Ascending aorta (tissue), 2 donors: ENCODE measurements at regions of chr2 and their contacts with region 1.

Region 1: DNA sequence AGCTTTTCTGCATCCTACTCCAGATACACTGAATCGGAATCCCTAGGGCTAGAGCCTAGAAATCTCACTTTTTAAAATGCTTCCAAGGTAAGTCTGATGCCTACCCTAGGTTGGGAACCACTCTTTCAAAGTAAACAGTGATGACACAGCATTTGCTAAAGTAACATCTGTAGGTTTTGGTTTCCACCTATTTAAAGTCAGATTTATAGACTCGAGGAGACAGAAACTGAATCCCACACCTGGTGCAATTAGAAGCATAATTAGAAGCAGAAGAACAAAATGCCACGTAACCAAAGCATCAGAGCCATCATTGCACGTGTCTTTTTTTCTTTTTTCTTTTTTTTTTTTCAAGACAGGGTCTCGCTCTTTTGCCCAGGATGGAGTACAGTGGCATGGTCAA is 40.9 kb downstream of the PDK1 start:
- DNase-seq: no peak
- H3K4me3 ChIP-seq: no peak overlapping the region
- H3K27ac ChIP-seq: no peak overlapping the region
- H3K4me1 ChIP-seq: peaks cover 2 to 4% of the 10 kb centered on the region in 2 donors
- H3K27me3 ChIP-seq: no peaks in the 10 kb centered on the region
- CTCF ChIP-seq: no peak

Region 2: DNA sequence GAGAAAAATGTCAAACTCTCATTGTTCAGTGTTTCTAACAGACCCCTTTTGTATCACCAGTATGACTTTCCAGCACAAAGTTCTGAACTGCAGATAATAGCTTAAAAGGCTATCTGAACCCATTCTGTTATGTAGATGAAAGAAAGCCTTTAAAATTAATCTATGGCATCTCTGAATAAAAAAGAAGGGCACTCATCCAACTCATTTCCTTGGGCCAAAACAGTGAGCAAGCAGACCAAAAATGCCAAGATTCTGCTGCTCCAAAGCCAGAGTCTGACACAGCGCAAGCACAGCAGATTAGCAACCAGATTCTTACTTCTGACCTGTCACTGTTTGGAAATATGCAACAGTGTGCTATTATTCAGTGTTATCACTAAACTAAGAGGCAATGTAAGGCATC is 192.0 kb before region 1 on chr2:
- intact Hi-C with region 1: no loop called
- DNase-seq: no peak
- H3K4me3 ChIP-seq: no peak overlapping the region
- H3K27ac ChIP-seq: no peak overlapping the region
- H3K4me1 ChIP-seq: no peaks in the 10 kb centered on the region
- H3K27me3 ChIP-seq: no peaks in the 10 kb centered on the region
- CTCF ChIP-seq: no peak

Region 3: GRCh38 chr2:172578054-172578453 is 18.7 kb before region 1 on chr2:
- intact Hi-C with region 1: no loop called
- DNase-seq: no peak
- H3K4me3 ChIP-seq: no peak overlapping the region
- H3K27ac ChIP-seq: no peak overlapping the region
- H3K4me1 ChIP-seq: no peaks in the 10 kb centered on the region
- H3K27me3 ChIP-seq: no peaks in the 10 kb centered on the region
- CTCF ChIP-seq: no peak

Region 4: GRCh38 chr2:172674034-172674967 is 77.5 kb after region 1 on chr2:
- intact Hi-C with region 1: loop called (anchors 1 kb)
- DNase-seq: no peak
- H3K4me3 ChIP-seq: no peak overlapping the region
- H3K27ac ChIP-seq: no peak overlapping the region
- H3K4me1 ChIP-seq: no peaks in the 10 kb centered on the region
- H3K27me3 ChIP-seq: no peaks in the 10 kb centered on the region
- CTCF ChIP-seq: peak; percentile 30 to 58 (median 39)

Region 5: DNA sequence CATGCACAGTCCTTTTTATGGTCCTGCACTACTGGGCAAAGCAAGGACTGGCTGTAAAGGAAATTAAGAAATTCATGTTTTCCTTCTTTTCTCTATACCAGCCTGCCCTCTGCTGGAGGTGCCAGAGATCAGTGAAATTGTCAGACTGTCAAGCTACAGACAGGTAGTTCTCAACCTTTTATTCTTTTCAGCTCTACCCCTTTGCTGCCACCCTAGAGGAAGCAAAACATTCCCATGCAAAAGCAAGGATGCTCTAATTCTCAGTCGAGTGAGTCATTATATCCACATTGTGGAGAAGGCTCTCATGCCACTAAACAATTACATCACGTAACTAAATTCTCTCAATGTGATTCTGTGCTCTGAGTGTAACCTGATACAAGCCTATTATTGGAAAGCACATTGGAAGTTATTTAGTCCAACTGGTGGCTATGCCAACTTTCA is 113.8 kb after region 1 on chr2:
- intact Hi-C with region 1: loop called (anchors 1 kb)
- DNase-seq: no peak
- H3K4me3 ChIP-seq: no peak overlapping the region
- H3K27ac ChIP-seq: no peak overlapping the region
- H3K4me1 ChIP-seq: no peaks in the 10 kb centered on the region
- H3K27me3 ChIP-seq: no peaks in the 10 kb centered on the region
- CTCF ChIP-seq: peak; percentile 19 to 61 (median 30)

Region 6: GRCh38 chr2:172735582-172736423 is 139.0 kb after region 1 on chr2 and contains the start of gene RAPGEF4:
- intact Hi-C with region 1: no loop called
- DNase-seq: no peak
- H3K4me3 ChIP-seq: peak within 1 kb of the TSS; percentile 54 to 68
- H3K27ac ChIP-seq: no peak within 1 kb of the TSS
- H3K4me1 ChIP-seq: peaks cover 0 to 3% of the 10 kb centered on the region in 2 donors
- H3K27me3 ChIP-seq: no peaks in the 10 kb centered on the region
- CTCF ChIP-seq: no peak
- total RNA-seq, gene RAPGEF4: 79.9 TPM

Region 7: DNA sequence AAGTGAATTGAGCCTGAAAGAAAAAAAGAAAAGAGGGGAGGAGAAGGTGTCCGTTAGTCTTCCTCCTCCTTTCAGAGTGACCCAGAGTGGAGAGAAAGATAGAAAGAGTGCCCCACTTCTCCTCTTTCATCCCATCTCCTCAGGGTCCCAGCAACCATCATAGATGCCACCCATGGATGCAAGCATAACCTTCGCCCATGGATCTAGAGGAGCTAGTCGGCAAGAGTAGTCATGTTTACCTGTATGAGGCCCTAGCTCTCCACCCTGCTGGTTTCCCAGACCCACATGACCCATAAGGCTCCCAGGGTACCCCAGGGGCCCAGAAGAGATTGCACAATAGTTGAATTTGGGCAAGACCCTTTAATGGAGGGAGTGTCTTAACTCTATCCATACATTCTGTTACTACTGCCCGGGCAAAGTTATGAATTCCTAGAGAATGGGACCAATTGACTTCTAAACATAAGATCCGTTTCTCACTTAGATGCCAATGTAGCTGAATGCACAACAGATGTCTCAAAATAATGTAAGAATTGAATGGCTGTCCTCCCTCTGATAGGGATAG is 701.8 kb after region 1 on chr2:
- intact Hi-C with region 1: no loop called
- DNase-seq: no peak
- H3K4me3 ChIP-seq: no peak overlapping the region
- H3K27ac ChIP-seq: no peak overlapping the region
- H3K4me1 ChIP-seq: no peaks in the 10 kb centered on the region
- H3K27me3 ChIP-seq: no peaks in the 10 kb centered on the region
- CTCF ChIP-seq: no peak